Right ventricle myocardium inferior (tissue), 1 donor: ENCODE measurements at regions of chr4 and their contacts with region 1.

Region 1: DNA sequence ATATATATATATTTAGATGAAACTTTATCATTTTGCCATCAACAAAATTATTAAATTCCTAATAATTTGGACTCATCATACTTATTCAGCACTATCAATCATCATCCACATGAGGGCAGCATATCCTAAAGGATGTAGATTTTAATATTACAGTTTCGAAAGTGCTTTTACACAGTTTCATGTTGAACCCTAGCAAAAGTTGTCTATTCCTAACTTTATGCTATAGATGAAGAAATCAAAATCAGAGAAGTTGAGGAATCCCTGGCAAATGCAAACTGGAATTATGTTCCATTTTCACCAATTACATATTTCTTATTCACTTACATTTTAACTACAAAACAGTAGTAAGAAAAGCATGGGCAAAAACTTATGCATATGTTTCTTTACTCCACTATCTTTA is 36.6 kb upstream of the UGT2A1 start:
- DNase-seq: no peak
- ATAC-seq: no peak

Region 2: GRCh38 chr4:69656653-69657158 is 32.9 kb before region 1 on chr4:
- intact Hi-C with region 1: no loop called
- DNase-seq: no peak
- ATAC-seq: no peak

Region 3: DNA sequence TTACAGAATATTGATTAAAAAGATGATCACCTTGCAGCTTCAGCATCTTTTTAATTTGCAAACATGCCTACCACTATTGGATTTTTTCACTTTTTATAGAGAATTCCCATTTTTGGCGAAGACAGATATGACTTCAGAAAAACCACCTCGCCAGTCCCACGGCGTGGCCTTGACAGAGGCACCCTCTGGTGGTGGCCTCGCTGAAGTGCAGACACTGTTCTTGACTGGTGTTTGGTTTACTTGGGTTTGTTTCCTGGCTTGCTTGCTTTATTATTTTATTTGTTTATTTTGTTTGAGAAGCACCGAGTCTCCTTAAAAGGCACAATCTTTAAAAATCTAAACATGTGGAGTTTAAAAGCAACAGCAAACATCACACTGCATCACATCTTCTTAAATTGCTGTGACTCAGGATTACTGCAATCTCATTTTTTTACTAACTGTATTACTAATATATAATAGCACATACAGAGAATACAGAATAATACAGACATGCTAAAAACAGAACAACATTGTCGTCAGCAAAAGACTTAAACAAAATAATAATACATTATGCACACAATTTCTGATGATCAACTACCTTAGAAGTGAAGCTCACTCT is 815.7 kb after region 1 on chr4:
- intact Hi-C with region 1: loop called (anchors 5 kb)
- DNase-seq: peak; percentile 65
- ATAC-seq: no peak

Region 4: DNA sequence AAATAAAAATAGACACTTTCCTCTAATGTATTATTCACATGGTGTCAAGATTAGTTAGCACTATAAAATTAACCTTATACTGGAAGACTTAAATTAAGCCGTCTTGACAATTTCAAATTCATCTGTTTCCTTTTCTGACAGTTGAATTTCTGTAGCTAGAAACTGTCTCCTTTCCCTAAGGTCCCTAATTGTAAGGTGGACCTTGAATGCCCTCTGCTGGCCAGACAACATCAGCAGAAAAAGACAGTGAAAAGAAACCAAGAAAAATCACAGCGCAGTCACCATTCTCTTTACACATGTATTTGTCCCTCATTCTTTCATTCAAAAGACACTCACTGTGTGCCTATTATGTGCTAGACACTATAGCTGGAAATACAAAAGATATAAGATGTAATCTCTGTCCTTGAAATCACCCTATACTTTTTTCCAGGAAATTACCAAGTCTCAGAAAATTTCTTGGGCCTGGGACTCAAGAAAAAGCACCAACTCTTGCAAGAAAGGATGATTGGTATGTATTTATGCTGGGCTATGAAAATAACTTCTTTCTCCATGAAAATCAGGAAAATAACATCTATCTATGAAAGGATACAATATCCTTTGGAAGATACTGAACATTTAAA is 869.7 kb after region 1 on chr4:
- intact Hi-C with region 1: loop called (anchors 5 kb)
- DNase-seq: no peak
- ATAC-seq: no peak